Motor neuron (in vitro differentiated cells): ENCODE measurements at regions of chr4 and their contacts with region 1.

Region 1: GRCh38 chr4:169270810-169271691 is at the start of gene SH3RF1:
- ATAC-seq: peak; percentile 86 to 91 (median 88)
- H3K4me3 ChIP-seq: peak within 1 kb of the TSS; percentile 54 to 96 (median 92)
- H3K27ac ChIP-seq: peak within 1 kb of the TSS; percentile 78 to 83
- H3K4me1 ChIP-seq: peaks cover 8 to 25% of the 10 kb centered on the region in 2 donors
- total RNA-seq, gene SH3RF1: 6.7 to 20.2 (median 14.3) TPM

Region 2: GRCh38 chr4:169024762-169025161 is 246.3 kb before region 1 on chr4:
- in situ Hi-C with region 1: loop called in 1 of 9 experiments (anchors 25 kb)
- ATAC-seq: peak; percentile 48 to 93 (median 80)
- H3K4me3 ChIP-seq: no peak overlapping the region
- H3K27ac ChIP-seq: no peak overlapping the region
- H3K4me1 ChIP-seq: peaks cover 0 to 2% of the 10 kb centered on the region in 2 donors